Endothelial cell of umbilical vein (primary cell): ENCODE measurements at regions of chr2 and their contacts with region 1.

Region 1: DNA sequence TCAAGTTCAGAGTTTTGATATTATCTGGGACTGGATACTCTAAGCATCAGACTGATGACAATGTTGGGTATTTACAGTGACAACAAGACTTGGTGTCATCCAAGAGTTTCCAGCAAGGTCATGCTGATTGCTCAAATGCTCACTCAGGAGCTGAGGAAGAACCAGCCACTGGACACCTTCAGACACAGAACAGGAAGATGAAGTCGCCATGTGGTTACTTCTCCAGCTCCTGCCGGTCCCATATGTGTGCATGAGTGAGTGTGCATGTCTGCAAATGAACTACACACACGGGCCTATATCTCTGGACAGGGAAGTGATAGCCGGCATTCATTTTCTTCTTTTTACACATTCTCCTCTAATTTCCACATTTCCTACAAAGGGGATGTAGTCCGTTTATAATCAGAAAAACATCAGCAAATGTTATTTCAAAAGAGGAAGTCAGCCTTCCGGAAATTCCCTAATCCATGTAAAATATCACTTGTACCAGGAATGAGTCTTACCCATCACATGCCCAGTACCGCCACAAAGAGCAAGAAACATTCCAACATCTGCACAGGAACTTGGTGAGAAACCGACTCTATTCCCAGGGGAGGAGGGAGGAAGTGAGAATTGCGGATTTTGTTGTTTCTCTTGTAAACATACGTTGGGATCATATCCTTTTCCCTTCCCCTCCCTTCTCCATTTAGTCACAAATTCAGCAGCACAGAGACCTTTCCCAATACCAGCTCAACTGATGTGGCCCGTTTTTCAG is 10.8 kb downstream of the RFX8 start:
- DNase-seq: peak; percentile 95
- H3K4me3 ChIP-seq: no peak overlapping the region
- H3K27ac ChIP-seq: peak overlapping the region; percentile 89
- H3K4me1 ChIP-seq: peaks cover 39% of the 10 kb centered on the region
- H3K27me3 ChIP-seq: no peaks in the 10 kb centered on the region
- CTCF ChIP-seq: no peak
- POLR2A ChIP-seq: peak; percentile 64

Region 2: GRCh38 chr2:101486258-101486701 is 22.2 kb after region 1 on chr2:
- CTCF ChIA-PET with region 1: no interaction called
- POLR2A ChIA-PET with region 1: no interaction called
- dilution Hi-C with region 1: no loop called
- intact Hi-C with region 1: loop called (anchors 1 kb)
- DNase-seq: peak; percentile 85
- H3K4me3 ChIP-seq: peak overlapping the region in 1 of 3 experiments; percentile 2
- H3K27ac ChIP-seq: peak overlapping the region; percentile 26
- H3K4me1 ChIP-seq: peaks cover 17% of the 10 kb centered on the region
- H3K27me3 ChIP-seq: no peaks in the 10 kb centered on the region
- CTCF ChIP-seq: no peak
- POLR2A ChIP-seq: no peak

Region 3: DNA sequence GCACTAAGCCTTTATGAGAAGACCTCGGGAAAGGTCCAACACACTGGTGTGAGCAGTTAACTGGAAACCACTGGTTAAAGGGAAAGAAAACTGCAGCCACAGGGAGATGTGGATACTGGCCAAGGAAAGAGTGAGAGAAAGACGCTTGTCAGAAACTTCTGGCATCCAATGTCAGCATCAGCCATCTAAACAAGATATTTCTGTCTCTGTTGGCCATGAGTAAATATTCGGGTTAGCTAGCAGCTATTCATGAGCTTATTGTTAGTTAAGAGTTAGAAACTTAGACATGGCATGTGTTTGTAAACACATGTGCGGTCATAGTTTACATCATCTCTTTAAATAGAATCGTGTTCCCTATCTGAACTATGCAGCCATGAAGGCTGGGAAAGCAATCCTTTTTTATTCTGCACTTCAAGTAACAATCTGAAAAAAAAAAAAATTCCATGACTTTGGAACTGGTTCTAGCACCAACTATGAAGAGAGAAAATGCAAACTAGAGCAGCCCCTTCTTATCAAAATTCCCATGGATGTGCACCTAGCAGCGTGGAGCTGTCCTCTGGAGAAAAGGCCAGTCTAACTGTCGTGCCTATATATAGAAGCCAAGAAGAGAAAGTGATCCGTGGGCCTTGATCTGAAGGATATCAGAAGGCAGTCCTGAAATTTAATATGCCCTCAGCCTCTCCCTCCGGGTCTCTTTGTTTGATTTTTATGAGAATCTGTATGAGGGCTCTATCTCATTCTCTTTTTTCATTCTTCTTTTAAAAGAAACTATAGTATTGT is 94.9 kb after region 1 on chr2:
- CTCF ChIA-PET with region 1: no interaction called
- POLR2A ChIA-PET with region 1: no interaction called
- dilution Hi-C with region 1: no loop called
- intact Hi-C with region 1: loop called (anchors 1 kb)
- DNase-seq: peak; percentile 72
- H3K4me3 ChIP-seq: no peak overlapping the region
- H3K27ac ChIP-seq: peak overlapping the region; percentile 32
- H3K4me1 ChIP-seq: peaks cover 18% of the 10 kb centered on the region
- H3K27me3 ChIP-seq: no peaks in the 10 kb centered on the region
- CTCF ChIP-seq: no peak
- POLR2A ChIP-seq: no peak

Region 4: GRCh38 chr2:101638181-101638711 is 174.2 kb after region 1 on chr2:
- CTCF ChIA-PET with region 1: no interaction called
- POLR2A ChIA-PET with region 1: no interaction called
- dilution Hi-C with region 1: no loop called
- intact Hi-C with region 1: no loop called
- DNase-seq: no peak
- H3K4me3 ChIP-seq: no peak overlapping the region
- H3K27ac ChIP-seq: no peak overlapping the region
- H3K4me1 ChIP-seq: no peaks in the 10 kb centered on the region
- H3K27me3 ChIP-seq: no peaks in the 10 kb centered on the region
- CTCF ChIP-seq: no peak
- POLR2A ChIP-seq: no peak